Endothelial cell of umbilical vein (primary cell): ENCODE measurements at regions of chrX and their contacts with region 1.

Region 1: DNA sequence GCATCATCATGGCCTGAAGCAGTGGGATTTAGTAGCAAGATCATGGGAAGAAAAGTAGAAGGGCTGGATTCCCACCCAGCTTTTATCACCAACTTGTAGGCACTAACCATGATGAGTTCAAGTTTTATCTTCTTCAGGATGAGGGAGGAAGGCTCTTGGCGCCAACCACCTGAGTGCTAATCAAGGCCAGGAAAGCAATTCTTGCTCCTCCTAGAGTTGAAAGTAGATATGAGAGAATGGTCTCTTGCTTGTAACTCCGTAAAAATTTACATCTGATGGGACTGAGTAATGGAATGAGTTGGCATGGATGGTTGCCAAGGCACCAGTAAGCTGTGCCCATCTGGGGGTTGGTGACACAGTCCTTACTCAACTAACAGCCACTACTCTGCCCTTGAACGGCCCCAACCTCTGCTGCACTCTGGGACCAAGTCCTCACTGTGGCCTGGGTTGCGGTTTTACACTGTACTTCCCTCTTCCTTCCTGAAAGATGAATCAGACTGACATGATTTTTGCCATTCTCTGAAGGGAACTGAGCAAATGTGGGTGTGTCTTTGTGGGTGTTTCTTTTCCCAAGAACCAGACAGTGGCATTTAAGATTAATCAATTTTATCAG is 39.4 kb upstream of the NDP start:
- DNase-seq: peak; percentile 69
- H3K4me3 ChIP-seq: no peak overlapping the region
- H3K27ac ChIP-seq: peak overlapping the region; percentile 52
- H3K4me1 ChIP-seq: peaks cover 9% of the 10 kb centered on the region
- H3K27me3 ChIP-seq: no peaks in the 10 kb centered on the region
- CTCF ChIP-seq: no peak
- POLR2A ChIP-seq: no peak

Region 2: GRCh38 chrX:43860646-43861370 is 151.8 kb before region 1 on chrX:
- CTCF ChIA-PET with region 1: no interaction called
- POLR2A ChIA-PET with region 1: no interaction called
- dilution Hi-C with region 1: no loop called
- intact Hi-C with region 1: loop called (anchors 1 kb)
- DNase-seq: peak; percentile 82
- H3K4me3 ChIP-seq: no peak overlapping the region
- H3K27ac ChIP-seq: no peak overlapping the region
- H3K4me1 ChIP-seq: peaks cover 4% of the 10 kb centered on the region
- H3K27me3 ChIP-seq: no peaks in the 10 kb centered on the region
- CTCF ChIP-seq: no peak
- POLR2A ChIP-seq: no peak

Region 3: DNA sequence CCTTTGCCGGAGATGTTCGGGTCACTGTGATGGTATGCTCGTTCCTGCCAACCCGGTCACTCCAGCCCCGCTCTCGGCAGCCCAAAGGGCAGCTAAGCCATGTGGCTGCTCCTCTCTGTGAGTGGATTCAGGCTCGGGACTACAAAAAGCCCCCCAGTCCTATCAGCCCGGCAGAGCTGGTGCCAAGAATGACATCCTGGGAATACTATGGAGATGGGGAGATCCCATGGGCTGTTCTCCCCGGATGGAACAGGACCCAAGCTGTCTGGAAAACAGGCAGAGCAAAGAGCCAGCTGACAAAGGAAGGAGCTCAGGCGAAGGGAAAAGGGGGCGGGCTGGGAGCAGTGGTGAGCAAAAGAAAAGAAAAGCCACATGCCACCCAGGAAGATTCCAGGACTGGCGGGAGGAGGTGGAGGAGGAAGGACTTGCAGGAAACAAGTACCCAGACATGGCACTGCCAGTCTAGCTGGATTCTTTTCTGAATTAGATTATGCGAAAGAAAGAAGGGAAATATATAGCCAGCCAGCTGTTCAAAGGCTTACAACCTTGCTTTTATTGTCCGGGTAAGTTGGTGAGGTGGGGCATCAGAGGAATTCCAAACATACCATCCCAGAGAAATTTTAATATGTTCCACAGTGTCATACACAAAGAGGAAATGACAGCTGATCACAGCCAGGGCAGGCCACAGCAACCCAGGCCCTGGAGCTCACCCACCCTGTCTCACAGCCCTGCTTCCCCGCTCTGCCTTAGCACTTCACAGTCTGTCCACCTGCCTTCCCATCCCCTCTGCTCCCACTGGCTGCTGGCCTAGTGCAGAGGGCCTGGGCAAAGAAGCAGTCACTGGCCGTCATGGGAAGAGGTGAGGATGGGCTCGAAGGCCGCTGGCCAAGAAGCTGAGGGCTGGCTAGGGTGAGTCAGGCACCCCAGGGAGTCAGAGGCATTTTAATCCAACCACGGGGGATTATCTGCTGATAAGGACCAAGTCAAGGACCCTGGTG is 42.8 kb before region 1 on chrX:
- CTCF ChIA-PET with region 1: interaction called, 3 read pairs
- POLR2A ChIA-PET with region 1: no interaction called
- dilution Hi-C with region 1: no loop called
- intact Hi-C with region 1: loop called (anchors 1 kb)
- DNase-seq: no peak
- H3K4me3 ChIP-seq: no peak overlapping the region
- H3K27ac ChIP-seq: no peak overlapping the region
- H3K4me1 ChIP-seq: peaks cover 17% of the 10 kb centered on the region
- H3K27me3 ChIP-seq: no peaks in the 10 kb centered on the region
- CTCF ChIP-seq: no peak
- POLR2A ChIP-seq: no peak

Region 4: GRCh38 chrX:44674906-44675305 is 662.3 kb after region 1 on chrX:
- CTCF ChIA-PET with region 1: no interaction called
- POLR2A ChIA-PET with region 1: no interaction called
- dilution Hi-C with region 1: no loop called
- intact Hi-C with region 1: no loop called
- DNase-seq: no peak
- H3K4me3 ChIP-seq: no peak overlapping the region
- H3K27ac ChIP-seq: no peak overlapping the region
- H3K4me1 ChIP-seq: no peaks in the 10 kb centered on the region
- H3K27me3 ChIP-seq: no peaks in the 10 kb centered on the region
- CTCF ChIP-seq: no peak
- POLR2A ChIP-seq: no peak